ENCODE measurements at regions of chr10 and their contacts with region 1.

Region 1: GRCh38 chr10:80460399-80461207 is 6.5 kb downstream of the TSPAN14 start:
- DNase-seq: peak; percentile 29
- H3K4me3 ChIP-seq: no peak overlapping the region
- H3K27ac ChIP-seq: peak overlapping the region; percentile 53
- H3K4me1 ChIP-seq: peaks cover 73% of the 10 kb centered on the region
- H3K27me3 ChIP-seq: no peaks in the 10 kb centered on the region
- CTCF ChIP-seq: no peak

Region 2: GRCh38 chr10:80509403-80510161 is 49.0 kb after region 1 on chr10:
- CTCF ChIA-PET with region 1: interaction called, 12 read pairs
- POLR2A ChIA-PET with region 1: no interaction called
- intact Hi-C with region 1: loop called (anchors 5 kb)
- DNase-seq: no peak
- H3K4me3 ChIP-seq: no peak overlapping the region
- H3K27ac ChIP-seq: no peak overlapping the region
- H3K4me1 ChIP-seq: no peaks in the 10 kb centered on the region
- H3K27me3 ChIP-seq: no peaks in the 10 kb centered on the region
- CTCF ChIP-seq: no peak

Region 3: DNA sequence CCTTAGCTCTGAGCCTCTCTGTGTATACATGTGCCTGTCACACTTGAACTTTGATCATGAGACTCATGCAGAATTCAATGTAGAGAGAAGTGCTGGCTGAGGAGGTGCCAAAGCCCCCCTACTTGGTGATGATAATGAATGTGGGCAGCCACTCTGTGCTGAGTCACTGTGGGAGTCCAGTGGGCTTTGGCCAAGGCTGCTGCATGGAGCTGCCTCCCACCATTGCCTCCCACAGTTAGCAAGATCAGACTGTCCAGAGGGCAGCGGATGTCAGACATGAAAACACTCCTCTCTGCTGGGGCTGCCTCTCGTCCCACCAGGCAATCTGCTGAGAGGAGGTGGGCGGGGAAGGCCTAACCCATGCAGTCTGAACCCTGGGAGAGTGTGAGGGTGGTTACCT is 257.4 kb after region 1 on chr10:
- CTCF ChIA-PET with region 1: no interaction called
- POLR2A ChIA-PET with region 1: no interaction called
- intact Hi-C with region 1: no loop called
- DNase-seq: no peak
- H3K4me3 ChIP-seq: no peak overlapping the region
- H3K27ac ChIP-seq: no peak overlapping the region
- H3K4me1 ChIP-seq: no peaks in the 10 kb centered on the region
- H3K27me3 ChIP-seq: no peaks in the 10 kb centered on the region
- CTCF ChIP-seq: no peak